Cardiac septum (tissue), 1 donor: ENCODE measurements at regions of chr6 and their contacts with region 1.

Region 1: DNA sequence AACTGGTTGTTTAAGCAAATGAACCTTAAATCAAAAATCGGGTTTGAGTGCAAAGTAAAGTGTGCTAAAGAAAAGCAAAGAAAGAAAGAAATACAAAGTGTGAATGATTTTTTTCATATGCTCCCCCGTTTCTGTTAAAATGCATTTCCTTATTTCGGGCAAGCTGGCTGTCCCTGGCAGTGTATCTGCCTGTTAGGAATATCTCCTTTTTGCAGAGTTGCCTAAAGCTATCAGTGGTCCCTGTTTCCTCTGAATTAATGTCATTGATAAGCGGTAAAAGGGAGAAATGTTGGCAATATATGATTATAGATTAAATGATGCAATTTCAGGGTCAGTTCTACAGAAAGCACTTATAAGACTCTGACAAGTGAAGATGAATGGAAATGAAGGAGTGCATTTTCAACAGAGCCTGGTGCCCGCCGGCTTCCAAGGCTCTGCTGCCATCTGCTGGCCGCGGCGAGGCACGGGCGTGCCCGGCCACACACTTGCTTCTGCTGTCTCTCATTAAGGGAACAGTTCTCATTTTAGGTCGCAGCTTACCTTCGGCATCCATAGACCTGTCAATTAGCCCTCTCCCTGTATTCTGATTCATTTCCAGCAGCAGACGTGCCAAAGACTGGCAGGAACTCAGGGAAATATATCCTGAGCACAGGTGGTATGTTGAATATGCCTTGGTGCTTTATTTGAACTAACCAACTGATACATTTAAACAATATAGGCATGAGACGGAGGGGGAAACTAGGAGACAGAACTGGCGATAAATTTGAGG is 381.9 kb downstream of the C6orf118 start:
- DNase-seq: peak; percentile 87

Region 2: DNA sequence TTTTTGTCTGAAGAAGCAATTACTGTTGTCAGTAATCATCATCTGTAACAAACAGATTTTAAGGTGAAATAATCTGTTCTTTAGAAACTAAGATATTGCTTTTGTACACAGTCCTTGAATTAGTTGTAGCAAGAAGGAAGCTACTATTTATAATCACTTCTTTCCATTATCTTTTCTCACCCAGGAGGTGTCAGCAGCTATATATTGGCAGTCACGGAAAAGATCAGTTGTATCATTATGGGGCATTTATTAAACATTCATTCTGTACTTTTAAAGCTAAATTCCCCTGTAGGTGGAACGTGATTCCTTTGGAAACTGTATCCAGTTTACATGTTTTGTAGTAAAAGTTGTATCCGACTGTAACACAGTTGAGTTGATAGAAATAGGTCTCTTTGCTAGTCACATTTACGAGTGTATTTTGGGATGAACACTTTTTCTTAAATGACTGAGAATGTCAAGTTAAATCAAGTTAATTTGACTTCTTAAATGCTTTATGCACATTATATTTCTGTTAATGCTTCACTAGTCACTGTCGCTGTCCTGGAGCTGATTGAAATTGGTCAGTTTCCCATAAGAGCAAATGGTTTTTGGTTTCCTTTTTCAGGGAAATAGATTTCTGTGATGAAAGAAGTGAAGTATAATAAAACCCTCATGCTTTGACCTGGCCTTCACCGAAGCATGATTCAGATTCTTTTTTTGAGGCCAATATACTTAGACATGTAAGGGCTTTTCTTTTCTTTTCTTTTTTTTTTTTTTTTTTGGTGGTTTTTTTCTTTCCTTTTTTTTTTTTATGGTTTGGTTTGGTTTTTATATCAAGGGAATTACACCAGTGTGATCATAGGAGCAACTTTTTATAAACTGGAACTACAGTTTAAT is 1507.8 kb before region 1 on chr6:
- intact Hi-C with region 1: loop called (anchors 5 kb)
- DNase-seq: no peak

Region 3: DNA sequence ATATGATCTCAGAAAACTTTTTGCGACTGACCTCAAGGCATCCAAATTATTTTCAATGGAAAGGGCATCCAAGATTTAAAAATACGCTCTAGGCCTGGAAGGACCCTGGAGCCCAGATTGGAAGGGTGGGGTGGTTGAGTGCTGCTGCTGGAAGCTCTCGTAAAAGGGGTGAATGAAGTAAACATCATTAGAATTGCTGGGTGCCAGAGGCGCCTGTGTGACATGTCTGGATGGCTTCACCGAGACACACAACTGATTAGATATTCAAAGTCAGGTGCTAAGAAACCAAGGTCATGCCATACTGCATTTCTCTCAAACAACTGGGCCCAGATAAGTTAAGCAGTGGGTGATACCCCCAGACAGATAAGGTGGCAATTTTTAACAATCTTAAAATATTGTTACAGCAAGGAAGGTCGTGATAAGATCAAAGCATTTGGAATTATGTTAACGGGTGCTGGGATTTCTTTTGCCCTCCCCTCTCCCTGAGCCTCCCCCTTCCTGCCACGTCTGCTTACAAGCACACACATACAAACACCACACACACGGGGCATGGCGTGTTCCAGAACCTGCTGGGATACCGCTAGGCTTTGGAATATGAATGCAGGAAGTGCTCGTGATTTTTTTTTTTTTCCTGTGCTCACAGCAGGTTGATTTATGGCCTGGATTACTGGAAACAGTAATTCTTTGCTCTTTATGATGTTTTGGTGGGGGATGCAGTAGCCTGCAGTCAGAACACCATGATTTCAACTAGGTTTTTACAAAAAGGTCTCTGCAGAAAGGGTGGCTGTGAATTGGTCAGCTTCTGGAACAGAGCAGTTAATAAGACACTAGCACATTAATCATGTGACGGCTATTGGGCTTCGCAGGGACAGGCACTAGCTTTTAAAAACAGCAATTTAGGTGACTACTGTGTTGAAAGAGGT is 961.8 kb before region 1 on chr6:
- intact Hi-C with region 1: loop called (anchors 10 kb)
- DNase-seq: no peak

Region 4: DNA sequence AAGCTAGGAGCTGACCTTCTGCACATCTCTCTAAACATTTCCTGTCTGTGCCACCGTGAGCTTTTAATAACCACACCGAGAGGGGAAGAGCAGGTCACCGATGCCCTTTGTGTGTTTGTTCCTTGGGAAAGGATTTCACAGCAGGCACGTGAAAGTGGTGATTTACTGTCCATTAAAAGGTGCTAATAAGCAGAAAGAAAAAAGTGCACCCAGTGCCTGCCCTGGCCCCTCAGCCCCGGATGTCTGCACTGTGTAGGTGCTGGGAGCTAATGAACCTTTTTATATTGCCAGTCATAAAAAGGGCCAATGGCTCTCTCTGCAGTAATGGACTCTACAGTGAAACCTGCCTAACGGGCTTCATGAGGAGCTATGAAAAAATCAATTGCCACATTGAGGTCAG is 69.4 kb after region 1 on chr6:
- intact Hi-C with region 1: no loop called
- DNase-seq: no peak